SK-N-SH (cell line): ENCODE measurements at regions of chr3 and their contacts with region 1.

Region 1: DNA sequence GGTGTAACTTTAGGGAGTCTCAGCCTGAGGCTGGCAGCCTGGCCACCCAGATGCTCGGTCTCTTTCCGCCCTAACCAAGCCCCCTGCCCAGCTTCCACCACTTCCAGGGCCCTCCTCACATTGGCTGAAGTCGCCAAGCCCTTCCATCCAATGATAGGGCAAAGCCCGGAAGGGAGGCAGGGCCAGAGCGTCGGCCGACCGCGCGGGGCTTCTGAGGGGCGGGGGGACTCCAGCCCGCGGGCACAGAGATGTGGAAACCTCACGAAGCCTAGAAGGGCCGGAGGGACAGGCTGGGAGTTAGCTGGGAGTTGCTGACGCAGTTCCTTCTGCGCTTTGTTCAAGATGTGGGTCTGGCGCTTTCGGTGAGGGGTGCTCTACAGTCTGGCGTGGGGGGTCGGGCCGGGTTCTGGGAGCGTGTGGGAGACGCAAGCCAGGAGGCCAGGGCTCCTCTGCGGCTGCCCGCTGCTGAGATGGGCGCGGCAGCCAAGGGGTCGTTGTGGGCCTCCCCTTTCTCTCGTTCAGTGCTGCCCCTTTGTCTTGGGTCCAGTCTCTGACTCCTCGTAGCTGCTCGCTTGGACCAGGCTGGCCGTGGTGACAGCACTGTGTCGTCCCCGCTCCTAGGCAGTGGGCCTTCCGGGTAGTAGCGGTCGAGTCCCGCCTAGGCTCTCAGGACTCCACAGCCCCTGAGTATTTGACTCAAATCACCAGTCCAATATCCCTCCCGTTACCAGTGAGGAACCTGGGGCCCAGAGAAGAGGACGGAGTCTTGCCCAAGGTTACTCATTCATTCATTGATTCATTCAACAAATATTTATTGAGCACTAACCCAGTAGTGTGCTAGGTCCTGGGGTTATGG is at the start of gene ZNF660:
- DNase-seq: peak; percentile 95
- H3K4me3 ChIP-seq: peak within 1 kb of the TSS; percentile 65 to 77
- H3K27ac ChIP-seq: peak within 1 kb of the TSS; percentile 14 to 84; a peak in 2 of 4 replicates
- H3K4me1 ChIP-seq: peaks cover 0 to 11% of the 10 kb centered on the region in 2 experiments; a peak in 2 of 4 replicates
- H3K27me3 ChIP-seq: no peaks in the 10 kb centered on the region
- CTCF ChIP-seq: no peak
- EP300 ChIP-seq: no peak
- RAD21 ChIP-seq: no peak
- polyA plus RNA-seq, gene ZNF660: 1.0 and 1.4 TPM in 2 replicates

Region 2: GRCh38 chr3:44338010-44338827 is 246.7 kb before region 1 on chr3 and contains the start of gene TCAIM:
- CTCF ChIA-PET with region 1: no interaction called
- POLR2A ChIA-PET with region 1: interaction called, 14 read pairs
- DNase-seq: peak; percentile 97
- H3K4me3 ChIP-seq: peak within 1 kb of the TSS; percentile 83 to 85
- H3K27ac ChIP-seq: peak within 1 kb of the TSS; percentile 72 to 98
- H3K4me1 ChIP-seq: peaks cover 5 to 22% of the 10 kb centered on the region in 2 experiments; a peak in 3 of 4 replicates
- H3K27me3 ChIP-seq: no peaks in the 10 kb centered on the region
- CTCF ChIP-seq: no peak
- EP300 ChIP-seq: peak in 1 of 2 experiments; percentile 61; a peak in 1 of 4 replicates
- RAD21 ChIP-seq: peak; percentile 27; the same call in 1 of the 2 replicates
- polyA plus RNA-seq, gene TCAIM: 8.4 and 12.4 TPM in 2 replicates

Region 3: GRCh38 chr3:44510000-44510368 is 74.9 kb before region 1 on chr3:
- CTCF ChIA-PET with region 1: interaction called, 3 read pairs
- POLR2A ChIA-PET with region 1: interaction called, 10 read pairs
- DNase-seq: no peak
- H3K4me3 ChIP-seq: peak overlapping the region; percentile 69 to 96
- H3K27ac ChIP-seq: peak overlapping the region; percentile 63 to 72
- H3K4me1 ChIP-seq: peaks cover 0 to 12% of the 10 kb centered on the region in 2 experiments; a peak in 1 of 4 replicates
- H3K27me3 ChIP-seq: no peaks in the 10 kb centered on the region
- CTCF ChIP-seq: no peak
- EP300 ChIP-seq: no peak
- RAD21 ChIP-seq: no peak

Region 4: DNA sequence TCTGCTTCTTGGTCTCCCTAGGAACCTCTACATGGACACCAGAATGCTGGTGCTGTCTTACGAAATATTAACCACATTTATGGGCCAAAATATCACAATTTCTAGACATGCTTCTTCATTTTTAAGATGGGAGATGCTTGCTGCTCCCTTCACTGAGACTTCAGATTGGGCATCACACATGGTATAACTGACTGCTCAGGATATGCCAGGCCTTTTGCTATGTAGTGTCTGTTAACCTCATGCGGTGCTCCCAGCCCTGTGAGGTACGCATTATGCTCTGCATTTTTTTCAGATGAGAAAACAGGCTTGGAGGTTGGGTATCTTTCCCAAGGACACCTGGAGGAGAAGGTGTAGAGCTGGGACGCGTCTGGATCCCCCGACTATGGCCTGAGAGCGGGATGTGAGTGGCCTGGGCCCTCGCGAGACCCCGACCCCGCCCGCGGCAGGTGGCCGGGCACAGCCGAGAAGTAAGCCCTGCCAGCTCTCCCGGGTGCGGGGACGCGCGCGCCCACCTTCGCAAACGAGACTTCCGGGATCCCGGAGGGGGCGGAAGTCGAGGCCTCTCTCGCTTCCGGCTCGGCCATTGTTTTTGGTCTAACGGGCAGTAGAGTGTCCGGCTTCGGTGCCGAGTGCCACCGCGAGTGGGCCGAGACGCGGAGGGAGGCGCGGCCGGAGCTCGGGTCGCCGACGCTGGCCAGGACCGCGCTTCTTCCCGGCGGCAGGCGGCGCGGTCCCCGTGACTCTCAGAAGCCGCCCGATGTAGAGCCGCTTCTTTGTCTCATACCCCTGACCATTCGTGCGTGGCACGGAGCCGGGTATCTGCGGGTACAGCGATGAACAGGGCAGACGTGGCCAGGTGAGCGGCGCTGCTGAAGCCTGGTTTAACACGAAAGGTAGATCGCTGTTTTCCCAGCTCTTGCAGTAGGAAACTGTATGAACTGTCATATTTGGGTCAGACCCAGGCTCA is 30.0 kb before region 1 on chr3 and contains the start of gene ZKSCAN7:
- CTCF ChIA-PET with region 1: no interaction called
- POLR2A ChIA-PET with region 1: interaction called, 13 read pairs
- DNase-seq: peak; percentile 98
- H3K4me3 ChIP-seq: peak within 1 kb of the TSS; percentile 71 to 95
- H3K27ac ChIP-seq: peak within 1 kb of the TSS; percentile 24 to 86; a peak in 3 of 4 replicates
- H3K4me1 ChIP-seq: peaks cover 0 to 21% of the 10 kb centered on the region in 2 experiments; a peak in 2 of 4 replicates
- H3K27me3 ChIP-seq: no peaks in the 10 kb centered on the region; the same call in 1 of the 2 replicates
- CTCF ChIP-seq: no peak
- EP300 ChIP-seq: no peak
- RAD21 ChIP-seq: no peak
- polyA plus RNA-seq, gene ZKSCAN7: 5.4 and 9.2 TPM in 2 replicates

Region 5: DNA sequence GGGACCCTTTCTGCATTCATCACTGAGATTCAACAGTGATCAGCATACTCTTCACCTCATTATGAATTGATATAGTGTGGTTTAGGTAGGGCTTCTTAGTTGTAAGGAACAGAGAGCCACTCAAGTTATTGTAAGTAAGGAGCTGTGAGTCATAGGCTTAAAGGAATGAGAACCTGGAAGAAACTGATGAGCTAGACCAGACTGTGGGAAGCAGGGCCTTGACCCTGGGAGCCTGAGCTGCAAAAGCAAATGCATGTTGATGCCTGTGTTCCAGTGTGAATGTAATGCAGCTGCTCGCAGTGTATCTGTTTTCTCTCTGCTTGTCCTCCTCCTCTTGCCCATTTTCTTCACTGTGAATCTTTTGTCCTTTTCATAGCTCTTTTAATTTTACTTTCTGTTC is 16.3 kb before region 1 on chr3:
- CTCF ChIA-PET with region 1: no interaction called
- POLR2A ChIA-PET with region 1: no interaction called
- DNase-seq: no peak
- H3K4me3 ChIP-seq: no peak overlapping the region; a peak in 1 of 4 replicates
- H3K27ac ChIP-seq: no peak overlapping the region
- H3K4me1 ChIP-seq: no peaks in the 10 kb centered on the region
- H3K27me3 ChIP-seq: no peaks in the 10 kb centered on the region
- CTCF ChIP-seq: no peak
- EP300 ChIP-seq: no peak
- RAD21 ChIP-seq: no peak

Region 6: GRCh38 chr3:44624749-44625480 is 40.0 kb after region 1 on chr3 and contains the start of gene ZNF197:
- CTCF ChIA-PET with region 1: no interaction called
- POLR2A ChIA-PET with region 1: interaction called, 11 read pairs
- DNase-seq: peak; percentile 90
- H3K4me3 ChIP-seq: peak within 1 kb of the TSS; percentile 76 to 90
- H3K27ac ChIP-seq: peak within 1 kb of the TSS; percentile 71 to 92
- H3K4me1 ChIP-seq: peaks cover 7 to 9% of the 10 kb centered on the region in 2 experiments; a peak in 3 of 4 replicates
- H3K27me3 ChIP-seq: no peaks in the 10 kb centered on the region
- CTCF ChIP-seq: no peak
- EP300 ChIP-seq: no peak
- RAD21 ChIP-seq: 0 out of 2 replicates have a peak, but pooled peaks have one; percentile 14
- polyA plus RNA-seq, gene ZNF197: 4.3 and 5.2 TPM in 2 replicates

Region 7: GRCh38 chr3:45078910-45079522 is 494.1 kb after region 1 on chr3:
- CTCF ChIA-PET with region 1: no interaction called
- POLR2A ChIA-PET with region 1: no interaction called
- DNase-seq: no peak
- H3K4me3 ChIP-seq: no peak overlapping the region
- H3K27ac ChIP-seq: no peak overlapping the region
- H3K4me1 ChIP-seq: peaks cover 0 to 4% of the 10 kb centered on the region in 2 experiments; a peak in 2 of 4 replicates
- H3K27me3 ChIP-seq: no peaks in the 10 kb centered on the region
- CTCF ChIP-seq: peak; percentile 33
- EP300 ChIP-seq: no peak
- RAD21 ChIP-seq: no peak